Activated CD8-positive, alpha-beta T cell treated with anti-CD3 and anti-CD28 coated beads, Interleukin-2, amount 10 ng/mL, durations not matched to agents 7 days and 5 days (primary cell): ENCODE measurements at regions of chr2 and their contacts with region 1.

Region 1: GRCh38 chr2:101205521-101205998 is 47.1 kb upstream of the CNOT11 start:
- DNase-seq: peak; percentile 71
- ATAC-seq: peak; percentile 91
- H3K4me3 Mint-ChIP-seq: peak overlapping the region; percentile 58
- H3K27ac Mint-ChIP-seq: peak overlapping the region; percentile 81
- H3K4me1 Mint-ChIP-seq: peaks cover 16% of the 10 kb centered on the region
- H3K27me3 Mint-ChIP-seq: peaks cover 4% of the 10 kb centered on the region

Region 2: GRCh38 chr2:100957996-100958653 is 247.4 kb before region 1 on chr2:
- CTCF ChIA-PET with region 1: no interaction called
- POLR2A ChIA-PET with region 1: no interaction called
- DNase-seq: no peak
- ATAC-seq: no peak
- H3K4me3 Mint-ChIP-seq: no peak overlapping the region
- H3K27ac Mint-ChIP-seq: no peak overlapping the region
- H3K4me1 Mint-ChIP-seq: peaks cover 11% of the 10 kb centered on the region
- H3K27me3 Mint-ChIP-seq: no peaks in the 10 kb centered on the region

Region 3: DNA sequence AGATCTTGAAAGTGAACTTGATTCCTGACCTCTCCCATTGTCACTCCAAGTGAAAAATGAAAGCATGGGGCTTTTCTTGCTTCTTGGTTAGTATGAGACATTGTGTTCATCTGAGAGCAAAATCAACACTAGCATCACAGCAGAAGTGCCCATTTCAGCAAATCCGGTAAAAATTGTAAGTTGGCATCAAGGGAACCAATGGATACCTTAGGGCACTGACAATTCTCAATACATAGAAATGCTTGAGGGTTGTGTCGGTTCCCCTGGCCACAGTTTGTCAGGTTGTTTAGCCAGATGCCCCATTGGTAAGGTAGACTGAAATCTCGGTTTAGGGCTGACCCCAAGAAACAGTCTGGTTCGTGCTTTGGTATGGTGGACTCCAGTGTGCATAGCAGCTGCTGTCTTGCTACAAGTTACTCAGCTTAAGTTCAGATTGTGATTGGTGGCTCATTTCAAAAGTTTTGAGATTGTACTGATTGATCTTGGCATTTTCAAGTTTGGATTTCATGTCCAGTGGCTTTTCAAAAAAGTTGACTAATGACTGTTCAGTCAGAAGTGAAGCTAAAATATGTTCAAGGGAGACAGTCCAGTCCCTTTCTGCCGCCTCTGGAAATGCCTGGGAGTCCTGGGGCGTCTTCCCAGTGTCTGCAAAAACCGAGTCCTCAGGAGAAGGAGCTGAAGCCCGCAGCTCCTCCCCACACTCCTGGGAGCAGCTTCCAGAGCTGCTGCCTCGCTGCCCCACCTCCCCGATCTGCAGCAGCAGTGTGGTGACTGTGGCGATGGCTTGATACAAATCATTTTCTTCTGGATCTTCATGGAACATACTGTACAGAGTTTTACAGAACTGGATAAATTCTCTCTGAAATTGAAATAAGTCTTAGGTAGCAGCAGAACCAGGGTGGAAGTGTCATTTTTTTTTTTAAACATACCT is 197.9 kb before region 1 on chr2:
- CTCF ChIA-PET with region 1: interaction called, 58 read pairs
- POLR2A ChIA-PET with region 1: interaction called, 3 read pairs
- DNase-seq: no peak
- ATAC-seq: no peak
- H3K4me3 Mint-ChIP-seq: no peak overlapping the region
- H3K27ac Mint-ChIP-seq: peak overlapping the region; percentile 26
- H3K4me1 Mint-ChIP-seq: peaks cover 58% of the 10 kb centered on the region
- H3K27me3 Mint-ChIP-seq: no peaks in the 10 kb centered on the region

Region 4: DNA sequence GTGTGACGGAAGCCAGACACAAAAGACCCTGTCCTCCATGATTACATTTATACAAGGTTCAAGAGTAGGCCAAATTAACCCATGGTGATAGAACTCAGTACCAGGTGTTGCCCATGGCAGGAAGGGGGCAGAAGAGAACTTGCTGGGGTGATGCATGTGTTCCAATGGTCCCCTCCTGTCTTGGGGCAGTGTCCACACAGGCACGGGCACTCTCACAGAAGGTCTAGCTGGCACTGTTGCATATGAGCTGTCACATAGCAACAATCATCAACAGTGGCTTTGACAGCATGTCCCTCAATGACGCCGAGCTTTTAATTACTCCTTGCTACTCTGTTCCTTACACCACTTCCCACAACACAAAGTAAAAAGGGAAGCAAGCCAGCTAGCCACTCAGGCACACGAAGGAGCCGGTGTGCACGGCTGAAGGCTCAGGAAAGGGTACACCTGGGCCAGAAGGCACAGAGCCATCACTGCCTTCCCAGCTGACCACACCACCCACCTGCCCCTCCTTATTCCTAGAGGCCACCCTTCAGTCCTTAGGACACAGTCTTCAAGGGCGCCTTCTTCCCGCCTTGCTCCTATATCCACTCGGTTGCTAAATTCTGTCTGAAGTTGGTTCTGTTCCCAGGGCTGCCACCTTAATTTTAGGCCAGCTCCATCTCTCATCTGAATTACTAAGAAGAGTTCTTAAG is 174.6 kb before region 1 on chr2:
- CTCF ChIA-PET with region 1: interaction called, 45 read pairs
- POLR2A ChIA-PET with region 1: no interaction called
- DNase-seq: no peak
- ATAC-seq: no peak
- H3K4me3 Mint-ChIP-seq: no peak overlapping the region
- H3K27ac Mint-ChIP-seq: no peak overlapping the region
- H3K4me1 Mint-ChIP-seq: no peaks in the 10 kb centered on the region
- H3K27me3 Mint-ChIP-seq: peaks cover 6% of the 10 kb centered on the region

Region 5: DNA sequence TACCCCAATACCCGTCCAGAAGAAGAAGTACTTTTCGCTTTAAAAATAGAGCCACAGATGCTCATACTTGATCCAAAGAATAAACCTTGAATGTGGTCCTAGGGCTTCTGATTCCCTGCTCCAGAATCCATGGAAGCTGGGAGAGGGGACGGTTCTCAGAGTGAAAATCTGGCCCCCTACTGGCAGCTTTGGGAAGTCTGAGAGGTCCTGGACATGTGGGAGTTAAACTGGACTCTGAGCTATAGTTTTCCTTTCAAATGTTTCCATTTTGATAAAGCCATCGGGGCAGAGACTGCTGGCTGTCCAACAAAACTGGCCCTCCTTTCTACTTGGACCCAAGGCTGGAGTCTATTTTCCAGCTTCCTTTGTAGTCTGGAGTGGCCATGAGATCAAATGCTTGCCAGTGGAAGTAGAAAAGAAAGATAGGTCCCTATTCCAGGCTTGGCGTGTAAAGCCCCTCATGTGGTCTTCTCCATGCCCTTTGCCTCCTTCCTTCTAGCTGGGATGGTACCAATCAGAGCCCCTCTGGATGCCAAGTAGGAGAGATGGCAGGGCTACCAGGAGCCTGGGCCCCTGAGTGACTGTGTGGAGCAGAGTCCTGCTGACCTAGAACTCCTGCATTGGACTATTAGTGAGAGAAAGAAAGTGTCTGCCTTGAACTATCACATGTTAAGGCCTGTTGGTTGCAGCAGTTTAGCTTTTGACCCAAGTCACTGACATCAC is 16.7 kb before region 1 on chr2:
- CTCF ChIA-PET with region 1: interaction called, 12 read pairs
- POLR2A ChIA-PET with region 1: interaction called, 3 read pairs
- DNase-seq: no peak
- ATAC-seq: no peak
- H3K4me3 Mint-ChIP-seq: no peak overlapping the region
- H3K27ac Mint-ChIP-seq: no peak overlapping the region
- H3K4me1 Mint-ChIP-seq: no peaks in the 10 kb centered on the region
- H3K27me3 Mint-ChIP-seq: no peaks in the 10 kb centered on the region

Region 6: GRCh38 chr2:101252408-101253012 is 47.0 kb after region 1 on chr2 and contains the start of gene CNOT11:
- CTCF ChIA-PET with region 1: interaction called, 14 read pairs
- POLR2A ChIA-PET with region 1: interaction called, 9 read pairs
- DNase-seq: peak; percentile 99
- ATAC-seq: peak; percentile 88
- H3K4me3 Mint-ChIP-seq: peak within 1 kb of the TSS; percentile 89
- H3K27ac Mint-ChIP-seq: peak within 1 kb of the TSS; percentile 96
- H3K4me1 Mint-ChIP-seq: peaks cover 45% of the 10 kb centered on the region
- H3K27me3 Mint-ChIP-seq: no peaks in the 10 kb centered on the region
- total RNA-seq, gene CNOT11: 64.4 to 64.7 TPM